ENCODE measurements at regions of chr11 and their contacts with region 1.

Region 1: GRCh38 chr11:9118277-9118676 is 26.9 kb upstream of the SCUBE2 start:
- DNase-seq: no peak
- H3K4me3 ChIP-seq: no peak overlapping the region
- H3K27ac ChIP-seq: no peak overlapping the region
- H3K4me1 ChIP-seq: no peaks in the 10 kb centered on the region
- H3K27me3 ChIP-seq: no peaks in the 10 kb centered on the region
- CTCF ChIP-seq: no peak

Region 2: DNA sequence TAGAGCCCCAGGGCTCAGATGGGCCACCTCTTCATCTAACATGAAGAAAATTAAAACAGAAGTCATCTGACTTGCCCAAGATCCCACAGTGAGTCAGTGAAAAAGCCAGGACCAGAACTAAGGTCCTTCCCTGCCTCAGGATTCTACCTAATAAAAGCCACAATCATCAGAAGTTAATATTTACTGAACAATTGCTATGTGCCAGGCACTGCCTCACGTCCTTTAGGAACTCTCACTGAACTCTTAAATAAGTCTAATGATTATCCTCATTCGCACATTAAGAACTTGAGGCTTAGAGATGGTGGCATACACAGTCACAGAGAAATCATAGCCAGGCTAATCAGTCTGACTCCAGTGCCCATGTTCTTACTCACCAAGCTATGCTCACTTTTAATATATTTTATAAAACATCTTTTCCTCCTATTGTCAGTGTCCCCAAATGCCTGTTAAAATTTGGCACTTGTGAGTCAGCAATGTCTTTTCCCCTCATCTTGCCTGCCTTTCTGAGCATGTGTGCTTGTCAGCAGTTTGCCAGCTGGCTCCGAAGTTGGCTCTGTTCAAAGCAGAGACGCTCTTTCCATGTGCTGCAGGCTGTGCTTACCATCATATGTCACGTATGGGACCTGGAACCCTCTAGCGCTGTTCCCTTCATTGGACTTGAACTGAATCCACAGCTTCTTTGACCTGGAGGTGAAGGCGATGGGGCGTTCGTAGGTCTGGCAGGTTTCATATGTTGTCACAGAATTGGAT is 93.0 kb before region 1 on chr11:
- intact Hi-C with region 1: loop called (anchors 5 kb)
- DNase-seq: no peak
- H3K4me3 ChIP-seq: no peak overlapping the region
- H3K27ac ChIP-seq: no peak overlapping the region
- H3K4me1 ChIP-seq: no peaks in the 10 kb centered on the region
- H3K27me3 ChIP-seq: no peaks in the 10 kb centered on the region
- CTCF ChIP-seq: no peak